ENCODE measurements at regions of chr2 and their contacts with region 1.

Region 1: GRCh38 chr2:174465327-174465726 is 21.5 kb downstream of the GPR155 start:
- DNase-seq: no peak
- H3K4me3 Mint-ChIP-seq: no peak overlapping the region
- H3K27ac Mint-ChIP-seq: no peak overlapping the region
- H3K4me1 Mint-ChIP-seq: no peaks in the 10 kb centered on the region
- H3K27me3 Mint-ChIP-seq: no peaks in the 10 kb centered on the region

Region 2: GRCh38 chr2:174334781-174335251 is 130.5 kb before region 1 on chr2 and contains the start of gene SP9:
- intact Hi-C with region 1: no loop called
- DNase-seq: no peak
- H3K4me3 Mint-ChIP-seq: peak within 1 kb of the TSS; percentile 53
- H3K27ac Mint-ChIP-seq: peak within 1 kb of the TSS; percentile 81
- H3K4me1 Mint-ChIP-seq: peaks cover 28% of the 10 kb centered on the region
- H3K27me3 Mint-ChIP-seq: peaks cover 77% of the 10 kb centered on the region
- total RNA-seq, gene SP9: not detected in 2 replicates

Region 3: GRCh38 chr2:174522553-174522952 is 57.2 kb after region 1 on chr2:
- intact Hi-C with region 1: loop called (anchors 1 kb)
- DNase-seq: no peak
- H3K4me3 Mint-ChIP-seq: no peak overlapping the region
- H3K27ac Mint-ChIP-seq: no peak overlapping the region
- H3K4me1 Mint-ChIP-seq: peaks cover 18% of the 10 kb centered on the region
- H3K27me3 Mint-ChIP-seq: peaks cover 2% of the 10 kb centered on the region

Region 4: GRCh38 chr2:174546581-174547506 is 81.5 kb after region 1 on chr2:
- intact Hi-C with region 1: loop called (anchors 1 kb)
- DNase-seq: peak; percentile 20
- H3K4me3 Mint-ChIP-seq: no peak overlapping the region
- H3K27ac Mint-ChIP-seq: no peak overlapping the region
- H3K4me1 Mint-ChIP-seq: peaks cover 6% of the 10 kb centered on the region
- H3K27me3 Mint-ChIP-seq: peaks cover 6% of the 10 kb centered on the region

Region 5: DNA sequence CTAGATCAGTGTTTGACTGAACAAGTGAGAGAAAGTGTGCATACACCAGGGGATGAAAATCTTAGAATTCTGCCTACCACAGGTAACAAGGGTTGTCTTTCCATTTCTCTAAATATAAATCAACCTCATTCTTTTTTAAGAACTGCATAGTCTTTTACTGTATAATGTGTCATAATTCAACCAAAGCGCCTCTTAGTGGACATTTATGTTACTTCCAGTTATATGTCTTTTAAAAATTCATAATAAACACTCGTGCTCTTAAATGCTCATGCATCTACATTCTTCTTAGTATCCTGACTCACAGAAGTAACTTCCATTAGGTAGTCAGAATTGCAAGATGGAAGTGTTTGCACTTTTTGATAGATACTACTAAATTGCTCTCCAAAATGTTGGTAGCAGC is 222.8 kb after region 1 on chr2:
- intact Hi-C with region 1: loop called (anchors 1 kb)
- DNase-seq: no peak
- H3K4me3 Mint-ChIP-seq: no peak overlapping the region
- H3K27ac Mint-ChIP-seq: no peak overlapping the region
- H3K4me1 Mint-ChIP-seq: peaks cover 47% of the 10 kb centered on the region
- H3K27me3 Mint-ChIP-seq: no peaks in the 10 kb centered on the region

Measured in activated T-helper 1 cell treated with anti-CD3 and anti-CD28 coated beads, Interleukin-12 subunit alpha, Interleukin-12 subunit beta, Interleukin-2, Interleukin-4 antibody, amounts not matched to agents 30 ng/mL and 10 ng/mL and 1 ng/mL, durations not matched to agents 14 hours and 24 hours and 36 hours (primary cell).